Mammary epithelial cell (primary cell): ENCODE measurements at regions of chr10 and their contacts with region 1.

Region 1: GRCh38 chr10:63275094-63275493 is 142.0 kb downstream of the NRBF2 start:
- DNase-seq: no peak
- H3K4me3 ChIP-seq: no peak overlapping the region
- H3K27ac ChIP-seq: no peak overlapping the region
- H3K4me1 ChIP-seq: no peaks in the 10 kb centered on the region
- H3K27me3 ChIP-seq: no peaks in the 10 kb centered on the region
- CTCF ChIP-seq: no peak

Region 2: DNA sequence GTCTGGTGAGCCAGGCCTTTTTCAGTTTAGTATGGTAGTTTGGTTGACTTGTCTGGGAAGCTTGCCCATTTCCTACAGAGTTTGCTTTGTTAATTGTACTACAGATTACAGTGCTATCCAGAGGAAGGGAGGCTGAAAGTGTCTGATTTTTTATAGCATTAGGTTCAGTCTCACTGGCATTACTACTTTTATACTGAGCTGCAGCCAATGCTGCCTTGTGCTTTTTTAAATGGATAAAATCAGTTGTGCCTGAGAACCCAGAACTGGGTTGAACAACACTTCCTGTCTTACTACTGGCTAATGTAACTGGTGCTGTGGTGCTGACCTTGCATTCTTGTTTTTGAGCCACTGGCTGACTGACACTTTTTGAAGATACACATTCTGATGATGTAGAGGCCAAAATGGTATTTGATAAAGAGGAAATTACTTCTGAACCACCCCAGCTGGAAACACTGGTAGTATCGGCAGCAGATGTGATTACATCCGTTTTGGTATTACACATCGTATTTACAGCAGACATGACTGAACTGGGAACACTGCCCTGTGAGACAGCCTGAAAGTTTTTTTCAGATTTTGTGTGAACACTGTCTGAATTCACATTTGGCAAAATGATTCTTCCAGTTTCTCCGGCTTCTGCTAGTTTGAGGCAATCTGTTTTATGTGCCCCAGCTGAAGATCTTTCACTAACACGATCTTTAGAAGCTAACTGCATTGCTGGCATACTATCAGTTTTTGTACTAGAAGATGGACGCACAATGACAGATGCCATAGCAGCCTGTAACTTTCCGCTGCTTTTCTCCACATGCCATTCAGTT is 67.9 kb before region 1 on chr10:
- CTCF ChIA-PET with region 1: no interaction called
- dilution Hi-C with region 1: loop called (anchors 5 kb)
- in situ Hi-C with region 1: no loop called
- intact Hi-C with region 1: no loop called
- DNase-seq: peak; percentile 62
- H3K4me3 ChIP-seq: no peak overlapping the region
- H3K27ac ChIP-seq: peak overlapping the region; percentile 28
- H3K4me1 ChIP-seq: peaks cover 13% of the 10 kb centered on the region
- H3K27me3 ChIP-seq: no peaks in the 10 kb centered on the region
- CTCF ChIP-seq: no peak

Region 3: DNA sequence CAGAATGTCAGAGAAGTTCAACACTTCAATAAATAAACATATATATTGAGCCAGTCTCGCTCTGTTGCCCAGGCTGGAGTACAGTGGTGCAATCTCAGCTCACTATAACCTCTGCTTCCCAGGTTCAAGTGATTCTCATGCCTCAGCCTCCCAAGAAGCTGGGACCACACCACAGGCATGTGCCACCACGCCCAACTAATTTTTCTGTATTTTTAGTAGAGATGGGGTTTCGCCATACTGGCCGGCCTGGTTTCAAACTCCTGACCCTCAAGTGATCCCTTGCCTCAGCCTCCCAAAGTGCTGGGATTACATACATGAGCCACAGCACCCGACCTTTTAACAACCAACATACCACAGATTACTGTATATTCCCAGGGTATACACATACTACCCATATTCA is 56.5 kb after region 1 on chr10:
- CTCF ChIA-PET with region 1: no interaction called
- dilution Hi-C with region 1: no loop called
- in situ Hi-C with region 1: no loop called
- intact Hi-C with region 1: no loop called
- DNase-seq: no peak
- H3K4me3 ChIP-seq: no peak overlapping the region
- H3K27ac ChIP-seq: no peak overlapping the region
- H3K4me1 ChIP-seq: no peaks in the 10 kb centered on the region
- H3K27me3 ChIP-seq: no peaks in the 10 kb centered on the region
- CTCF ChIP-seq: no peak

Region 4: GRCh38 chr10:63622097-63622496 is 347.0 kb after region 1 on chr10:
- CTCF ChIA-PET with region 1: no interaction called
- dilution Hi-C with region 1: no loop called
- in situ Hi-C with region 1: no loop called
- intact Hi-C with region 1: no loop called
- DNase-seq: no peak
- H3K4me3 ChIP-seq: no peak overlapping the region
- H3K27ac ChIP-seq: no peak overlapping the region
- H3K4me1 ChIP-seq: no peaks in the 10 kb centered on the region
- H3K27me3 ChIP-seq: no peaks in the 10 kb centered on the region
- CTCF ChIP-seq: no peak